Activated T-helper 2 cell treated with anti-CD3 and anti-CD28 coated beads, Interferon-gamma antibody, Interleukin-2, Interleukin-4, amounts not matched to agents 10 μg/mL and 5 μg/mL and 100 μg/mL, durations not matched to agents 14 hours and 24 hours and 36 hours (primary cell): ENCODE measurements at regions of chrX and their contacts with region 1.

Region 1: DNA sequence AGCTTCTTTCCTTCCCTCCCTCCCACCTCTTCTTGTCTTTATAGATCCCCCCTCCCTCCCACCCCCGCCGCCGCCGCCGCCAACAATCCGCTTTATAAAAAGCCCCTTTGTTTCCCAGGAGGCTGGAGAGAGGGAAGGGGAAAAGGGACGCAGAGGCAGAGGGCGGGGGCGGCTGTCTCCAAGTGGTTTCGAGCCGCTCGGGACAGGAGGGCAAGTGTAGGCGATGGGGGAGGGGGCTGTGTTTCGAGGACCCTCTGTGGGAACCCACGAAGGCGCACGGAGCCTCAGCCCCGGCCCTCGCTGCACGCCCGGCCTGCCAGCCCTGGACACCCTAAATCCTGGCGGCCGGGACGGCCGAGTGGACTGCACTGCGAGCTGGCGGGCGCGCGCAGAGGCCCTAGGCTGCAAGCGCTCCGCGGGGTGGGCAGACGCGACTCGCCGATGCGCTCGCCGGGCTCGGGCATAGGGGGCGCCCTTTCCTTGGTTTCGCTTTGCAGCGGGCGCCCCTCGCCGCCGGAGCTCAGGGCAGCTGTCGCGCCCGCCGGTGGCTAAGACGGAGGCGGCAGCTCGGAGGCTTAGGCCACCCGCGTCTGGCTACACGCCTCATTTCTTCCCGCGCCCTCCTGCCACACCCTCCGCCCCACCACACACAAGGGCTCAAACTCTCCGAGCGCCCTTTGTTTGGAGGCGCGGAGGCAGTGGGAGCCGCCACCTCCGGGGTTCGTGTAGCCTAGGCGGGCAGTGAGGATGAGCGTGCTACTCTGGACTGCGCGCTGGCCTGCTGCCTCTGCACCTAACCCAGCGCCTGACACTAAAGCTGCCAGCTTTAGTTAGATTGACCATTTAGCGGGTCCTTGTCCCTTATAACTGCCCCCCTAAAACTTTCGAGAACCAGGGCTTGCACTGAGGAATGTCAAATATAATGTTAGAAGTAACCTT is 2.2 kb downstream of the MAMLD1 start:
- DNase-seq: peak; percentile 62
- H3K4me3 Mint-ChIP-seq: peak overlapping the region; percentile 76
- H3K27ac Mint-ChIP-seq: peak overlapping the region; percentile 84
- H3K4me1 Mint-ChIP-seq: peaks cover 23% of the 10 kb centered on the region
- H3K27me3 Mint-ChIP-seq: peaks cover 15% of the 10 kb centered on the region

Region 2: DNA sequence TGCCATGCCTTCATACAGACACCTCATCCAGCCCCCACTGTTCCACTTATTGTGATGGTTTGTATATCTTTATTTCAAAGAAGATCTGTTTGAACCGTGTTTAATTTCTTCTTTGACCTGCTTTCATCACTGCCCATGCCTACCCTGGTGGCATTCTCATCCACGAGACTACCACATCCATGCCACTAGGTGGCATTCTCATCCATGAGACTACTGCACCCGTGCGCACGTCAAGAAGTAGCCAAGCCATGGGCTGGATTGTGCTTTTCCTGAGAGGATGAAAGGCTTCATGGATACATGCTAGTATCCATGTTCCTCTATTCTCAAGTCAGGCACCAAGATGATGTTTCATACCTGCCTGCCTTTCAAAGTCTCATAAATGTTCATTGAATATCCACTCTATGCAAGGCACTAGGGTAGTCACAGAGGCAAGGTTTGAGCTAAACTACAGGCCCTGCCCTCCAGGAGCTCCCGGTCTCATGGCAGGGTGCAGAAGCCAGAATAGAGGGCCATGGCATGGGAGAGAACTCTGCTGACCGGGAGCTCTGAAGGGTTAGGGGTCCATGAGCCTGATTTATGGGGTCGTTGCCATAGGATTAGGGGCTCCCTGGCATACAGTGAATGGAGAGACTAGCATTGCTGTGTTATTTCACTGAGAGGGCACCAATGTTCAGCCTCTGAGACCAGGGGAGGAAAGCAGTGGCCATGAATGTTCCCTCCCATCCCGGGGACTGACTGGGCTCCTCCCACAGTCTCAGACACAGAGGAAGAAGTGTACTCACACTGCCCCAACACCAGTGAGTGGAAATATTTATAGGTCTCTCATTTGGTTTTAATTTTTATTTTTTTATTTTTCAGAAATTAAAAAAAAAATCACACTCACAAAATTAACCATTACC is 402.2 kb before region 1 on chrX:
- intact Hi-C with region 1: loop called (anchors 2 kb)
- DNase-seq: no peak
- H3K4me3 Mint-ChIP-seq: no peak overlapping the region
- H3K27ac Mint-ChIP-seq: no peak overlapping the region
- H3K4me1 Mint-ChIP-seq: peaks cover 5% of the 10 kb centered on the region
- H3K27me3 Mint-ChIP-seq: no peaks in the 10 kb centered on the region

Region 3: GRCh38 chrX:150324035-150324728 is 41.1 kb before region 1 on chrX:
- intact Hi-C with region 1: no loop called
- DNase-seq: no peak
- H3K4me3 Mint-ChIP-seq: no peak overlapping the region
- H3K27ac Mint-ChIP-seq: no peak overlapping the region
- H3K4me1 Mint-ChIP-seq: peaks cover 2% of the 10 kb centered on the region
- H3K27me3 Mint-ChIP-seq: peaks cover 15% of the 10 kb centered on the region

Region 4: GRCh38 chrX:150405576-150405975 is 40.3 kb after region 1 on chrX:
- intact Hi-C with region 1: loop called (anchors 5 kb)
- DNase-seq: no peak
- H3K4me3 Mint-ChIP-seq: no peak overlapping the region
- H3K27ac Mint-ChIP-seq: no peak overlapping the region
- H3K4me1 Mint-ChIP-seq: peaks cover 26% of the 10 kb centered on the region
- H3K27me3 Mint-ChIP-seq: peaks cover 2% of the 10 kb centered on the region

Region 5: DNA sequence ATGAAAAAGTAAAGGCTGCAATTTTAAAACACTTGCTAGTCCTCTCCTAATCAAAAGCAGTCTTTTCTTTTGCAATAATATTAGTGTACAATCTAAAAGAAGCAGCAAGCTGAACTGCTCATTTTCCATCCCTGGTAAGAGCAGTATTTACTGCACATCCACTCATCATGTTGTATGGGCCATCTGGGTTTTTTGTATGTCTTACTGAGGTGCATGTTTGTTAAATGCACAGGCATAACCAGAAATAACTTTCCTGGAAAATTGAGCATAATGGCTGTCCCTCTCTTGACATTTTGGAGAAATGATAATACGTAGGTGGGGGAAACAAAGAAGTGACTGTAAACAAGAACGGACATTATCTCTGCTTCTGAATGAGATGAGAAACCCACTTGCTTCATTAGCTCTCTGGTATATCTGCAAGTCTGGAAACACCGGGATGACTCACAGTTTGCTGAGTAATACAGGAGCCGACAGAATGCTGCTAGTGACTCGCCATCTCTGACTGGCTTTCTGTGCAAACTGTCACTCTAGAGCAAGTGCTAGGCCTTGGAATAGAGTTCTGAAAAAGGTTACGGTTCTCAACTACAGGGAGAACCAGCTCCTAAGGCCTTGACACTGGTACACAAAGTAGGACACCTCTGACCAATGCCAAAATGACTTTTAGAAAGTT is 117.4 kb after region 1 on chrX:
- intact Hi-C with region 1: loop called (anchors 1 kb)
- DNase-seq: peak; percentile 30
- H3K4me3 Mint-ChIP-seq: peak overlapping the region; percentile 75
- H3K27ac Mint-ChIP-seq: peak overlapping the region; percentile 99
- H3K4me1 Mint-ChIP-seq: peaks cover 55% of the 10 kb centered on the region
- H3K27me3 Mint-ChIP-seq: no peaks in the 10 kb centered on the region

Region 6: GRCh38 chrX:150536455-150537116 is 171.3 kb after region 1 on chrX:
- intact Hi-C with region 1: no loop called
- DNase-seq: no peak
- H3K4me3 Mint-ChIP-seq: no peak overlapping the region
- H3K27ac Mint-ChIP-seq: no peak overlapping the region
- H3K4me1 Mint-ChIP-seq: no peaks in the 10 kb centered on the region
- H3K27me3 Mint-ChIP-seq: no peaks in the 10 kb centered on the region

Region 7: DNA sequence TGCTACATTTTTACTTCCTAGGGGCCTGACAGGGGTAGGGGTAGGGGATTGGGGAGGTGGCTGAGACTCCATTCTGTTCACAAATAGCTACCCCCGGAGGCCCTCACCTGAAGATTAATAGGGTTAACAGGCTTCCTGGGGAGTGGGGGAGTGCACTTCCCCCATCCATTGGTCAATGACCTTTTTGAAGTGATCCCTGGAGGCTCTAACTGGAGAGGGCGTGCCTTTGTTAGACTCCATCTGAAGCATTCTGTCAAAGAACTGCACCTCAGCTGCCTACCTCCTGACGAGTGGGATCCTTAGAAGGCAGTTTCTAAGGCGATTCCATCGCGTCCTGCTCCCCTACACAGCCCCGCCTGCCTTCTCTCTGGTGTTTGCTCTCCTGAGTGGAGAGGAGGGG is 193.1 kb after region 1 on chrX:
- intact Hi-C with region 1: no loop called
- DNase-seq: no peak
- H3K4me3 Mint-ChIP-seq: no peak overlapping the region
- H3K27ac Mint-ChIP-seq: no peak overlapping the region
- H3K4me1 Mint-ChIP-seq: no peaks in the 10 kb centered on the region
- H3K27me3 Mint-ChIP-seq: peaks cover 4% of the 10 kb centered on the region